Caco-2 (cell line): ENCODE measurements at regions of chr11 and their contacts with region 1.

Region 1: DNA sequence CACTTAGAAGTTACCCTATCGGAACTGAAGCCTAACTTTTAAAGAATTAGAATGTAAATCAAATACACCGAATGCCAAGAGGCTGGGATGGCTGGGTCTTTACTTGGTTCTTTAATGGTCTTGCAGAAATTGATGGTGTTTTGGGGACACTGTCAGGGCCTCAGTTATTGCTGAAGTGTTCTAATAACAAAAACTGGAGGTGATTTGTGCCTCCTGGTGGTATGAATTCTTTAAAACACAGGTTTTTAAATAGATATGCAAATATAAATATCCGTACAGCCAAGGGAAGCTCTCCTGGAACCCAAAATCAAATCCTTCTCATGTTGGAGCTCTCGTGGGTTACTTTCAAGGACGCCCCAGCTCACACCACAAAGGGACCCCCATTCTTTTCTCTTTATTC is 19.3 kb upstream of the TMPRSS5 start:
- DNase-seq: peak in 1 of 2 experiments; percentile 20
- H3K4me3 ChIP-seq: no peak overlapping the region
- H3K4me3 Mint-ChIP-seq: peak overlapping the region; percentile 44
- H3K27ac Mint-ChIP-seq: peak overlapping the region; percentile 79
- H3K4me1 ChIP-seq: peaks cover 79% of the 10 kb centered on the region
- H3K4me1 Mint-ChIP-seq: peaks cover 67% of the 10 kb centered on the region
- H3K27me3 ChIP-seq: no peaks in the 10 kb centered on the region
- H3K27me3 Mint-ChIP-seq: no peaks in the 10 kb centered on the region
- CTCF ChIP-seq: peak; percentile 19 to 48

Region 2: DNA sequence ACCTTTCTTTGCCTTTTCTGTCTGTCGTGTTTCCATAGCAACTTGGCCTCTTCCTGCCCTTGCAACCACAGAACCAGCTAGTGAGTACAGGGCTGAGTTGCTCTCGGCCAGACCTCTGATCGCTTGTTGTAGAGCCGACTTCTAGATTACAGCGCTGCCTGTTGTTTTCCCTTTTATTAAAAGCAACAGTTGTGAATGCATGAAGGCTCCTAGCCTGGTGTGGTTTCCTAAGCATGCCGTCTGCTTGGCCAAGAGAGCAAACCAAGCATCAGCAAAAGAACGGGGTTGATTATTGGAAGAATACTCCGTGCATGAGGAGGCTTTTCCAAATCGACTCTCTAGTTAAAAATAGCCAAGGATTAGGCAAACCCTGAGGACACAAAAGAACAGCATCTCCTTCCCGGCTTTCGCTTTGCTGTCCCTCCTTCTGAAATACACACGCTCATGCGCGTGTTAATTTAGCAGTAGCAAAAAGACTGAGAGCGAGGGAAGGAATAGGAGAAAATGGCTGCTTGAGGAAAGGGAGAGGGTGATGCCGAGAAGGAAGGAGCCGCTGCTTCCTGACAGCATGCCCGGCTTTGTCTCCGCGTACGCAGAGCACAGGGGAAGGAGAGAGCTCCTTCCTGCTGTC is 482.5 kb before region 1 on chr11:
- CTCF ChIA-PET with region 1: no interaction called
- POLR2A ChIA-PET with region 1: no interaction called
- intact Hi-C with region 1: no loop called
- DNase-seq: no peak
- H3K4me3 ChIP-seq: no peak overlapping the region
- H3K4me3 Mint-ChIP-seq: no peak overlapping the region
- H3K27ac Mint-ChIP-seq: no peak overlapping the region
- H3K4me1 ChIP-seq: no peaks in the 10 kb centered on the region
- H3K4me1 Mint-ChIP-seq: no peaks in the 10 kb centered on the region
- H3K27me3 ChIP-seq: peaks cover 16% of the 10 kb centered on the region
- H3K27me3 Mint-ChIP-seq: peaks cover 38% of the 10 kb centered on the region
- CTCF ChIP-seq: no peak

Region 3: GRCh38 chr11:113532697-113533424 is 192.5 kb before region 1 on chr11:
- CTCF ChIA-PET with region 1: interaction called, 16 read pairs
- POLR2A ChIA-PET with region 1: interaction called, 8 read pairs
- intact Hi-C with region 1: loop called (anchors 1 kb)
- DNase-seq: peak; percentile 85 to 87
- H3K4me3 ChIP-seq: no peak overlapping the region
- H3K4me3 Mint-ChIP-seq: no peak overlapping the region
- H3K27ac Mint-ChIP-seq: peak overlapping the region; percentile 55
- H3K4me1 ChIP-seq: peaks cover 37% of the 10 kb centered on the region
- H3K4me1 Mint-ChIP-seq: peaks cover 44% of the 10 kb centered on the region
- H3K27me3 ChIP-seq: no peaks in the 10 kb centered on the region
- H3K27me3 Mint-ChIP-seq: no peaks in the 10 kb centered on the region
- CTCF ChIP-seq: peak; percentile 98

Region 4: DNA sequence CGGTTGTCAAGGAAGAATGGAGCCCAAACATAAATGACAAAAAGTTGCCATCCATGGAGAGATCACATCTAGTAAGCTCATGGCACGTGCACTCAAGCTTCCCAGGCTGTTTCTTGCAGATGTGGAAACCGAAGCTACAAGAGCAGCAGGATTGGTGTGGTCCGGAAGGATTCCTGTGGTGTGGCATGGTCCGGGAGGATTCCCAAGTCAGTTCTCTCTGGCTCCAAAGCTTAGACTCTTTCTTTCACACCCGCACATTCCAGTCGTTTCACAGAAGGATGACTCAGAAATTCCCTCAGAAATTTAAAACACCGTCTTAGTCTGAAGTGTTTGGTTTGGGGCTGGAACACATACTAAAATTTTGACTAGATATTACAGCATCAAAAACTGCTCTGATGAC is 172.2 kb before region 1 on chr11:
- CTCF ChIA-PET with region 1: interaction called, 18 read pairs
- POLR2A ChIA-PET with region 1: no interaction called
- intact Hi-C with region 1: loop called (anchors 2 kb)
- DNase-seq: peak in 1 of 2 experiments; percentile 47
- H3K4me3 ChIP-seq: no peak overlapping the region
- H3K4me3 Mint-ChIP-seq: peak overlapping the region; percentile 12
- H3K27ac Mint-ChIP-seq: peak overlapping the region; percentile 46
- H3K4me1 ChIP-seq: peaks cover 55% of the 10 kb centered on the region
- H3K4me1 Mint-ChIP-seq: peaks cover 45% of the 10 kb centered on the region
- H3K27me3 ChIP-seq: no peaks in the 10 kb centered on the region
- H3K27me3 Mint-ChIP-seq: no peaks in the 10 kb centered on the region
- CTCF ChIP-seq: no peak

Region 5: GRCh38 chr11:113664069-113664980 is 61.1 kb before region 1 on chr11:
- CTCF ChIA-PET with region 1: interaction called, 12 read pairs
- POLR2A ChIA-PET with region 1: interaction called, 12 read pairs
- intact Hi-C with region 1: loop called (anchors 1 kb)
- DNase-seq: peak; percentile 77 to 86
- H3K4me3 ChIP-seq: peak overlapping the region; percentile 19
- H3K4me3 Mint-ChIP-seq: peak overlapping the region; percentile 69
- H3K27ac Mint-ChIP-seq: peak overlapping the region; percentile 99
- H3K4me1 ChIP-seq: peaks cover 63% of the 10 kb centered on the region
- H3K4me1 Mint-ChIP-seq: peaks cover 42% of the 10 kb centered on the region
- H3K27me3 ChIP-seq: no peaks in the 10 kb centered on the region
- H3K27me3 Mint-ChIP-seq: no peaks in the 10 kb centered on the region
- CTCF ChIP-seq: no peak

Region 6: GRCh38 chr11:113760241-113760640 is 34.8 kb after region 1 on chr11:
- CTCF ChIA-PET with region 1: no interaction called
- POLR2A ChIA-PET with region 1: no interaction called
- intact Hi-C with region 1: no loop called
- DNase-seq: no peak
- H3K4me3 ChIP-seq: no peak overlapping the region
- H3K4me3 Mint-ChIP-seq: no peak overlapping the region
- H3K27ac Mint-ChIP-seq: no peak overlapping the region
- H3K4me1 ChIP-seq: no peaks in the 10 kb centered on the region
- H3K4me1 Mint-ChIP-seq: no peaks in the 10 kb centered on the region
- H3K27me3 ChIP-seq: no peaks in the 10 kb centered on the region
- H3K27me3 Mint-ChIP-seq: no peaks in the 10 kb centered on the region
- CTCF ChIP-seq: no peak

Region 7: DNA sequence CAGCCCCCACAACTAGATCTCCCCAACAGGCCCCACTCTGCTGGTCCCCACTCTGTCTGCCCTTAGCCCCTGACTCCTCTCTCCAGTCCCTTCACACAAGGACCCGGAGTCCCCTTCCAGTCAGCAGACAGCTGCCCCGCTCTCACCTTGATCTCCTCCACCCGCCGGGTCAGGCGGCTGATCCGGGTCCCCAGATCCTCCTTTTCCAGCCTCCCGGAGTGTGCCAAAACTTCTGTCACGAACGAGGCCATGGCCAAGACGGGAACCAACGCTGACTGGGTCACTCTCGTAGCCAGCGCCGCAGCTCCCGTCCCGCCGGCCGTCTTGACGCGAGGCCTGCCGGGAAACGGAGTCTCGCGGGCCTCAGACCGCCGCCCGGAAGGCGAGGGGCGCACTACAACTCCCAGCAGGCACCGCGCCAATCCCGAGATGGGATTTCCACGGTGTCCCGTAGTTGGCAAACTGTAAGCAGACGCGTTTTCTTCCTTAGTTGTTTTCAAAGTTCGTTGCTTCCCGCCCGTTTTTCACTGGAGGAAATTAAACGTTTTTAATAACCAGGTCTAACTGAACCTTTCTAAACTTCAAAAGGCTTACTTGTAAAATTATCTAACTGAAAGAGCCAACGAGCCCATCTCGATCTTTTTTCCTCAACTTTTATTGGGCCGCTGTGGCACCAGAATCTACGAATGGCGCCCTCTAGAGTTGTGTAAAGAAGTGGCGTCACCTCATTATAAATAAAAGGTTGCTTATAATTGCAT is 48.2 kb after region 1 on chr11 and contains the start of gene ZW10:
- CTCF ChIA-PET with region 1: interaction called, 12 read pairs
- POLR2A ChIA-PET with region 1: interaction called, 6 read pairs
- intact Hi-C with region 1: loop called (anchors 1 kb)
- DNase-seq: peak; percentile 97 to 99
- H3K4me3 ChIP-seq: peak within 1 kb of the TSS; percentile 72
- H3K4me3 Mint-ChIP-seq: peak within 1 kb of the TSS; percentile 99
- H3K27ac Mint-ChIP-seq: peak within 1 kb of the TSS; percentile 97
- H3K4me1 ChIP-seq: peaks cover 5% of the 10 kb centered on the region; the same call in 1 of the 2 replicates
- H3K4me1 Mint-ChIP-seq: peaks cover 7% of the 10 kb centered on the region
- H3K27me3 ChIP-seq: no peaks in the 10 kb centered on the region
- H3K27me3 Mint-ChIP-seq: peaks cover 3% of the 10 kb centered on the region
- CTCF ChIP-seq: peak; percentile 97
- total RNA-seq, gene ZW10: 43.1 and 44.0 TPM in 2 replicates

Region 8: GRCh38 chr11:114135737-114136151 is 410.3 kb after region 1 on chr11:
- CTCF ChIA-PET with region 1: no interaction called
- POLR2A ChIA-PET with region 1: no interaction called
- intact Hi-C with region 1: no loop called
- DNase-seq: no peak
- H3K4me3 ChIP-seq: no peak overlapping the region
- H3K4me3 Mint-ChIP-seq: no peak overlapping the region
- H3K27ac Mint-ChIP-seq: no peak overlapping the region
- H3K4me1 ChIP-seq: peaks cover 12% of the 10 kb centered on the region; the same call in 1 of the 2 replicates
- H3K4me1 Mint-ChIP-seq: peaks cover 18% of the 10 kb centered on the region
- H3K27me3 ChIP-seq: no peaks in the 10 kb centered on the region
- H3K27me3 Mint-ChIP-seq: no peaks in the 10 kb centered on the region
- CTCF ChIP-seq: no peak